H1 (cell line): ENCODE measurements at regions of chr10 and their contacts with region 1.

Region 1: GRCh38 chr10:89563861-89564478 is 28.6 kb upstream of the SLC16A12 start:
- DNase-seq: no peak
- H3K4me3 ChIP-seq: no peak overlapping the region
- H3K27ac ChIP-seq: no peak overlapping the region
- H3K4me1 ChIP-seq: peaks cover 0 to 14% (median 5%) of the 10 kb centered on the region in 4 experiments; a peak in 3 of 7 replicates
- H3K27me3 ChIP-seq: no peaks in the 10 kb centered on the region; a peak in 1 of 7 replicates
- CTCF ChIP-seq: peak in 2 of 3 experiments; percentile 58; a peak in 2 of 4 replicates
- EP300 ChIP-seq: no peak
- POLR2A ChIP-seq: no peak
- RAD21 ChIP-seq: peak; percentile 82 to 88

Region 2: GRCh38 chr10:89414146-89414878 is 149.7 kb before region 1 on chr10 and contains the start of gene IFIT5:
- CTCF ChIA-PET with region 1: interaction called, 12 read pairs
- POLR2A ChIA-PET with region 1: interaction called, 3 read pairs
- DNase-seq: no peak
- H3K4me3 ChIP-seq: peak within 1 kb of the TSS; percentile 78 to 82 (median 80)
- H3K27ac ChIP-seq: no peak within 1 kb of the TSS
- H3K4me1 ChIP-seq: peaks cover 0 to 10% (median 3%) of the 10 kb centered on the region in 4 experiments; a peak in 6 of 7 replicates
- H3K27me3 ChIP-seq: peaks cover 0 to 20% (median 15%) of the 10 kb centered on the region in 4 experiments; a peak in 6 of 7 replicates
- CTCF ChIP-seq: peak in 1 of 3 experiments; percentile 6; a peak in 1 of 4 replicates
- EP300 ChIP-seq: no peak
- POLR2A ChIP-seq: peak; percentile 46 to 66
- RAD21 ChIP-seq: 0 out of 4 replicates have a peak, but pooled peaks of 1 of the 2 experiments have one; percentile 0
- total RNA-seq, gene IFIT5: 2.6 TPM in 2 replicates

Region 3: DNA sequence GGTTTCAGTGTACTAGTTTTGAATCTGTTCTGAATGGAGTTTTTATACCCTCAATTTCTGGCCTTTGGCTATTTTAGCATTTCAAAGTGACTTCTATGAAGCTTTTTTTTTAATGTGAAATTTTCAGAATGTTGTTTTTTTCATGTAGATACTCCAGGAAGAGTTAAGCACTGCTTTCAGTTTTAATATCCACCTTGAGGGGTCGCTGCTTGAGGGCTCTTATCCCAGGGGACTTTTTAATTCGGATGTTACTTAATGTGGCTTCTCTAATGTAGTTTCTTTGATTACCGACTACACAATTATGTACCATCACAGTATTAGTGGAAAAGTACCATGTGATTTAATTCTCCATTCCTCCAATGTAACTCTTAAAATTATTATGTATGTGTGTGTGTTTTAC is 144.4 kb before region 1 on chr10:
- CTCF ChIA-PET with region 1: interaction called, 12 read pairs
- POLR2A ChIA-PET with region 1: interaction called, 3 read pairs
- DNase-seq: no peak
- H3K4me3 ChIP-seq: no peak overlapping the region
- H3K27ac ChIP-seq: no peak overlapping the region
- H3K4me1 ChIP-seq: peaks cover 0 to 10% (median 3%) of the 10 kb centered on the region in 4 experiments; a peak in 6 of 7 replicates
- H3K27me3 ChIP-seq: peaks cover 0 to 20% (median 15%) of the 10 kb centered on the region in 4 experiments; a peak in 6 of 7 replicates
- CTCF ChIP-seq: peak in 2 of 3 experiments; percentile 43 to 57; a peak in 2 of 4 replicates
- EP300 ChIP-seq: no peak
- POLR2A ChIP-seq: no peak
- RAD21 ChIP-seq: peak; percentile 32 to 46; a peak in 3 of 4 replicates

Region 4: GRCh38 chr10:89426230-89426868 is 137.6 kb before region 1 on chr10:
- CTCF ChIA-PET with region 1: interaction called, 22 read pairs
- POLR2A ChIA-PET with region 1: no interaction called
- DNase-seq: no peak
- H3K4me3 ChIP-seq: no peak overlapping the region
- H3K27ac ChIP-seq: no peak overlapping the region
- H3K4me1 ChIP-seq: peaks cover 0 to 13% (median 5%) of the 10 kb centered on the region in 4 experiments; a peak in 2 of 7 replicates
- H3K27me3 ChIP-seq: no peaks in the 10 kb centered on the region
- CTCF ChIP-seq: peak in 2 of 3 experiments; percentile 68 to 78; a peak in 2 of 4 replicates
- EP300 ChIP-seq: no peak
- POLR2A ChIP-seq: no peak
- RAD21 ChIP-seq: peak; percentile 91 to 92

Region 5: GRCh38 chr10:89431977-89432376 is 132.0 kb before region 1 on chr10:
- CTCF ChIA-PET with region 1: interaction called, 22 read pairs
- POLR2A ChIA-PET with region 1: no interaction called
- DNase-seq: no peak
- H3K4me3 ChIP-seq: no peak overlapping the region
- H3K27ac ChIP-seq: no peak overlapping the region
- H3K4me1 ChIP-seq: peaks cover 0 to 9% (median 5%) of the 10 kb centered on the region in 4 experiments; a peak in 2 of 7 replicates
- H3K27me3 ChIP-seq: no peaks in the 10 kb centered on the region
- CTCF ChIP-seq: no peak
- EP300 ChIP-seq: no peak
- POLR2A ChIP-seq: no peak
- RAD21 ChIP-seq: no peak

Region 6: GRCh38 chr10:89543841-89544240 is 20.1 kb before region 1 on chr10:
- CTCF ChIA-PET with region 1: no interaction called
- POLR2A ChIA-PET with region 1: no interaction called
- DNase-seq: no peak
- H3K4me3 ChIP-seq: no peak overlapping the region
- H3K27ac ChIP-seq: no peak overlapping the region
- H3K4me1 ChIP-seq: no peaks in the 10 kb centered on the region
- H3K27me3 ChIP-seq: no peaks in the 10 kb centered on the region
- CTCF ChIP-seq: no peak
- EP300 ChIP-seq: no peak
- POLR2A ChIP-seq: no peak
- RAD21 ChIP-seq: no peak

Region 7: DNA sequence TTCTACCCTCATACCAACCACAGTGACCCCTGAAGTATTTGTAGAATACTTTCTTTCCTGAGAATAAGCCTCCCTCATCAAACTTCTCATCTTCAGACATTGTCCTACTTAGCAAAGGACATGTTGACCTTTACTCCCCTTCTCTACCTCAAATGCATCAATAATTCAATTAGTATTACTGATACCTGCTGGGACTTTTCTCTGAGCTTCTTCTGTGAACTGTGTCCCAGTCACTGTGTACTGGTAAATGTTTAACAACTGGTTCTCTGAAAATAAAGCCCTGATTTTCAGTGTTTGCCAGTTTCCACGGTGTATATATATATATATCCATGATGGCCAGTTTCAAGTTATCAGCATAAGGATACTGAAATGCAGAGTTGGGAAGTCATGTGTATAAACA is 68.9 kb after region 1 on chr10:
- CTCF ChIA-PET with region 1: no interaction called
- POLR2A ChIA-PET with region 1: no interaction called
- DNase-seq: no peak
- H3K4me3 ChIP-seq: no peak overlapping the region
- H3K27ac ChIP-seq: no peak overlapping the region
- H3K4me1 ChIP-seq: no peaks in the 10 kb centered on the region
- H3K27me3 ChIP-seq: no peaks in the 10 kb centered on the region; a peak in 1 of 7 replicates
- CTCF ChIP-seq: no peak
- EP300 ChIP-seq: no peak
- POLR2A ChIP-seq: no peak
- RAD21 ChIP-seq: no peak